Endothelial cell of umbilical vein (primary cell): ENCODE measurements at regions of chr18 and their contacts with region 1.

Region 1: GRCh38 chr18:3623769-3624545 is 174.0 kb downstream of the TGIF1 start:
- DNase-seq: peak; percentile 84
- H3K4me3 ChIP-seq: peak overlapping the region in 1 of 3 experiments; percentile 21
- H3K27ac ChIP-seq: peak overlapping the region; percentile 89
- H3K4me1 ChIP-seq: peaks cover 31% of the 10 kb centered on the region
- H3K27me3 ChIP-seq: no peaks in the 10 kb centered on the region
- CTCF ChIP-seq: no peak
- POLR2A ChIP-seq: peak; percentile 50

Region 2: DNA sequence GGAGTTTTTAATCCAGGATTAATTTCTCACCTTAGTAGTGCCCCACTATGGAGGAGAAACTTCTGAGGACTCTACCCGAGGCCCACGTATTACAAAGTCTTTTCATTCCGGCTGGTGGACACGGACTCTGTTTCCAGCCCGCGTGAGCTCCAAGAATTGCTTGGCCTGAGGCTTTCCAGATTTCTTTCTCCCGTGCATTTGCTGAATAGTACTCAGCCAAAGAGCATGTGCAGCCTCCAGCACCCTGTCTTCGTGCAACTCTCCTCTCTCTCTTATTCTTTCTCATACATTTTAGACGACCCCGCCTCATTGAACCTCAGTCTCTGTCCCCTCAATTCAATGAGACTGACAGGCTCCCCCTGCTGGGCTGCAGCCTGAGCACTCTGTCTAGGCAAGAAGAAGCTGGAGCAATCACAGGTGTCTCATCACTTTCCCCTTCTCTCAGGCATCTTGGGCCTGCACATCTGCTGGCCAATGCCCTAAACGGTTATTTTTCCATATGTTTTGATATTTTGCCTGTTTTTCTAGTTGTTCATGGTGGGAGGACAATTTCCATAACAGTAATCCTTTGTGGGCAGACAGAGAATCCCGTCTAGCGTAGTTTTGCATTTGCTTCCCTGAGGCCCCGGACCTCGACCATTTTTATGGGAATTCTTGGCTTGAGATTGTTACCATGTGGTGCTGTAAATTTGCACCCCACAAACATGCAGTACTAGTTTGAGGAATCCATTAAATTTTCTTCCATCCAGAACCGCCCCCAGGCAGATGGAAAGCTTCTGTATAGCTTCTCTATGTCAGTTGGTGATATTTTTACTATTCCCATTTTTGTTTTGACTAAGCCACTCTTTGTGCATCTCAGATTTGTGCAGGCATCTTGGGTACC is 560.9 kb before region 1 on chr18:
- CTCF ChIA-PET with region 1: no interaction called
- POLR2A ChIA-PET with region 1: no interaction called
- dilution Hi-C with region 1: no loop called
- intact Hi-C with region 1: no loop called
- DNase-seq: peak; percentile 46
- H3K4me3 ChIP-seq: no peak overlapping the region
- H3K27ac ChIP-seq: no peak overlapping the region
- H3K4me1 ChIP-seq: peaks cover 8% of the 10 kb centered on the region
- H3K27me3 ChIP-seq: no peaks in the 10 kb centered on the region
- CTCF ChIP-seq: peak; percentile 70 to 82
- POLR2A ChIP-seq: no peak

Region 3: GRCh38 chr18:3104190-3105054 is 519.5 kb before region 1 on chr18:
- CTCF ChIA-PET with region 1: no interaction called
- POLR2A ChIA-PET with region 1: no interaction called
- dilution Hi-C with region 1: no loop called
- intact Hi-C with region 1: loop called (anchors 2 kb)
- DNase-seq: peak; percentile 91
- H3K4me3 ChIP-seq: peak overlapping the region in 1 of 3 experiments; percentile 21
- H3K27ac ChIP-seq: peak overlapping the region; percentile 96
- H3K4me1 ChIP-seq: peaks cover 30% of the 10 kb centered on the region
- H3K27me3 ChIP-seq: no peaks in the 10 kb centered on the region
- CTCF ChIP-seq: no peak
- POLR2A ChIP-seq: no peak

Region 4: GRCh38 chr18:3319399-3319798 is 304.6 kb before region 1 on chr18:
- CTCF ChIA-PET with region 1: no interaction called
- POLR2A ChIA-PET with region 1: no interaction called
- dilution Hi-C with region 1: no loop called
- intact Hi-C with region 1: no loop called
- DNase-seq: peak; percentile 18
- H3K4me3 ChIP-seq: no peak overlapping the region
- H3K27ac ChIP-seq: peak overlapping the region; percentile 3
- H3K4me1 ChIP-seq: peaks cover 33% of the 10 kb centered on the region
- H3K27me3 ChIP-seq: no peaks in the 10 kb centered on the region
- CTCF ChIP-seq: no peak
- POLR2A ChIP-seq: no peak

Region 5: DNA sequence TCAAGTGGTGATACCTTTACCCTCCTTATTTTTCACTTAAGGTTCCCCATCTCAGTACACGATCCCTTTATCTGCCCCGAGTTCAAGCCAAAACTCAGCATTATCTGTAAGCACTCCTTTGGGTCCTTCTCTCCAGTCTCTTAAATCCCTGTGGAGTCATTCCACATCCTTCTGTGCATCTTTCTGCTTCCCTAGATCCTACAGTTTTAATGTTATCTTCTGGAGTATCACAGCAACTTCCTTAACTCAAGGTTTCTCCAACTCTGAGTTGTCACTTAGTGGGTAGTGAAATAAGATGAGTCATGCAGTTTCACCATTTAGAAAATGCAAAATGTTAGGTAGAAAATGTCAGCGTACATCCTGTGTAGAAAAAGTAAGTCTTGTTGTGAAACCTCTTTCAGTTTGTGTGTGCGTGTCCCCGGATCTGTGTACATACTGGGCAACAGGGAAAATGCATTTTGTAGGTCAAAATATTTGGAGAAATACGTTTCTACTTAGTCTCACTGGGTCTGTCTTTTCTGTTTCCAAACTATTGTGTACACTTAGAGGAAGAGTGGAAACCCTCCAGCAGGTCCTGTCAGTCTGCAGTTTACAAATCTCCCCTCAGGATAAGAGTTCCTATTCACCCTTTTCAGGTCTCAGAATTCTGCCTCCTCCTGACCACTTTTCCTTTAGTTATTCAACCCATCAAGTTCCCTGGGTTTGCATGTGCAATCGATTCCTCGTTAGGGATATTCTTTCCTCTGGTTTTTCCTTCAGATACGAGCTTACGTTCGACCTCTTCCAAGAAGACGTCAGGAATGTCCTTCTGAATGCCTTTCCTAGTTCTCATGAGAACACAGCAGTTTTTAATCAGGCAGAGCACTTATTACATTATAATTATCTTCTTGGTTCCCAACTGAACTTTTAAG is 19.2 kb before region 1 on chr18:
- CTCF ChIA-PET with region 1: interaction called, 10 read pairs
- POLR2A ChIA-PET with region 1: interaction called, 13 read pairs
- dilution Hi-C with region 1: no loop called
- intact Hi-C with region 1: loop called (anchors 1 kb)
- DNase-seq: peak; percentile 90
- H3K4me3 ChIP-seq: peak overlapping the region; percentile 41 to 95 (median 83)
- H3K27ac ChIP-seq: peak overlapping the region; percentile 96
- H3K4me1 ChIP-seq: peaks cover 43% of the 10 kb centered on the region
- H3K27me3 ChIP-seq: no peaks in the 10 kb centered on the region
- CTCF ChIP-seq: no peak
- POLR2A ChIP-seq: peak; percentile 32

Region 6: DNA sequence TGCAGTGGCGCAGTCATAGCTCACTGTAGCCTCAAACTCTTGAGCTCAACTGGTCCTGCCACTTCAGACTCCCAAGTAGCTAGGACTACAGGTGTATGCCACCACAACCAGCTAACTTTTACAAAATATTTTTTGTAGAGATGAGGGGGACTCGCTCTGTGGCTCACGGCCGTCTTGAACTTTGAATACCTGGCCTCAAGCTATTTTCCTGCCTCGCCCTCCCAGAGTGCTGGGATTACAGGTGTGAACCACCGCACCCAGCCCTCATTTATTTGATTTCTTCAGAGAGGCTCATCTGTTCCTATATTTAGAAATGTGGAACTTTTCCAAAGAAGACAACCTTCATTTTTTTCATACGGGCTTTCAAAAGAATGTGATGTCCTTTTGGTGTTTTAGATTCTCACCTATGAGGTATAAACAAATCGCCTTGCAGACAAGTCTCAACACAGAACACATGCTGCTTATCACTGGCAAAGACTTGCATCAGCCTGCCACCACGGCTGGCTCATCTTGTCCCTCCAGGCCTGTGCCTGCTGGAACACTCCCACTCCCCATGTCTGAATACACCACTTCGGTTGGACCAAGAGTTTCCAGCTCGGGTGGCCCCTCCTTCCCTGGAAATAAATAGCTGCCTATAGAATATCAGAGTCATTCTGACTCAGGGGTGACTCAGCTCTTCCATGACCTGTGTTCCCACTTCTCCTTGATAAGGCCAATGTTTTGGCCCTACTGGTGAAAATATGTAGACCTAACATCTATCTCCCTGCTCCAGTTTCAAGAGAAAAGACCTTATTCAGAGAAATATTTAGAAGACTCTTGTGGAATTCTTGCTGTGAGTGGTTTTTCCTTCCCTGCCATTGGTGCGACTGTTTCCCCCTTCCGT is 28.7 kb after region 1 on chr18:
- CTCF ChIA-PET with region 1: interaction called, 4 read pairs
- POLR2A ChIA-PET with region 1: interaction called, 12 read pairs
- dilution Hi-C with region 1: no loop called
- intact Hi-C with region 1: loop called (anchors 1 kb)
- DNase-seq: peak; percentile 97
- H3K4me3 ChIP-seq: peak overlapping the region in 1 of 3 experiments; percentile 42
- H3K27ac ChIP-seq: peak overlapping the region; percentile 83
- H3K4me1 ChIP-seq: peaks cover 46% of the 10 kb centered on the region
- H3K27me3 ChIP-seq: no peaks in the 10 kb centered on the region
- CTCF ChIP-seq: peak in 1 of 2 donors; percentile 4
- POLR2A ChIP-seq: no peak